ENCODE measurements at regions of chr14 and their contacts with region 1.

Region 1: GRCh38 chr14:47226877-47227520 is 448.4 kb downstream of the MDGA2 start:
- DNase-seq: no peak

Region 2: DNA sequence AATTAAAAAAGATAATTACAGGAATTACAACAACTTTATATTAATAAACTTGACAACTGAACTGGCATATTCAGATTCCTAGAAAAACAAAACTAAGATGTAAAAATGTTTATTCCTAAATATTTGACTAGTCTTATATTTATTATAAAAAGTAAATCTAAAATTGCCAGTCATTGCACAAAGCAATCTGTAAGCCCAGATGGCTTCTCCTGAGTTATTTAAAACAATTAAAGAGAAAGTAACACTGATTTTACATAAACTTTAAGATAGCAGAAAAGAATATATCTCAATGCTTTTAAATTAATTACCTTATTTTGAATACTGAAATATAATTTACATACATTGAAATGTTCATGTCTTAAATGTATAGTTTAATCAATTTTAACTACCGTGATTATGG is 141.3 kb before region 1 on chr14:
- intact Hi-C with region 1: loop called in 1 of 2 experiments (anchors 2 kb)
- DNase-seq: no peak

Region 3: GRCh38 chr14:47179906-47180305 is 47.1 kb before region 1 on chr14:
- intact Hi-C with region 1: no loop called
- DNase-seq: no peak